Aorta (tissue), 5 donors: ENCODE measurements at regions of chr2 and their contacts with region 1.

Region 1: DNA sequence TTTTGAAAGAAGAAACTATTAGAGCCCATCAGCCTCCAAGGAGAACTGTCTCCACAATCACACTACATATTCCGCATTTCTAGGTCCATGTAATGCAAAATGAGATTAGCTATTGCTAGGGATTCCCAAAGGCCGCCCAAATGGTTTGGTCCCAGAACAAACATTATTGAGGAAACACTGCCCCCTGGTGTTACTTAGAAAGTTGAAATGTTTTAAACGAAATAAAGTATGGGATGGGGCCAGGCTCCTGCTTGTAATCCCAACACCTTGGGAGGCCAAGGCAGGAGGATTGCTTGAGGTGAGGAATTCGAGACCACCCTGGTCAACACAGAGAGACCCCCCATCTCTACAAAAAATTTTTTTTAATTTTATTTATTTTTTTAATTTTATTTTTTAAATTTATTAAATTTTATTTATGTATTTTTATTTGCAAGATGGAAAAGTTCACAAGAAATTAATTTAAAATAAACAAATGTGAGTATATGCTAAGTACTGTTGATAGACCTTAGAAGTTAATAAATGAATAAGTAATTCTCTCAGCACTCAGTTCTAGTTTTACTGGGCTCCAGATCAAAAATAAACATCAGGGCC is 5.5 kb downstream of the NHEJ1 start:
- DNase-seq: no peak
- ATAC-seq: peak; percentile 66
- H3K4me3 ChIP-seq: no peak overlapping the region
- H3K27ac ChIP-seq: no peak overlapping the region
- H3K4me1 ChIP-seq: no peaks in the 10 kb centered on the region
- H3K27me3 ChIP-seq: no peaks in the 10 kb centered on the region

Region 2: GRCh38 chr2:218995972-218996711 is 159.0 kb before region 1 on chr2:
- intact Hi-C with region 1: loop called in 1 of 2 experiments (anchors 10 kb)
- DNase-seq: peak; percentile 87 to 96
- ATAC-seq: peak; percentile 87
- H3K4me3 ChIP-seq: no peak overlapping the region
- H3K27ac ChIP-seq: no peak overlapping the region
- H3K4me1 ChIP-seq: no peaks in the 10 kb centered on the region
- H3K27me3 ChIP-seq: no peaks in the 10 kb centered on the region

Region 3: DNA sequence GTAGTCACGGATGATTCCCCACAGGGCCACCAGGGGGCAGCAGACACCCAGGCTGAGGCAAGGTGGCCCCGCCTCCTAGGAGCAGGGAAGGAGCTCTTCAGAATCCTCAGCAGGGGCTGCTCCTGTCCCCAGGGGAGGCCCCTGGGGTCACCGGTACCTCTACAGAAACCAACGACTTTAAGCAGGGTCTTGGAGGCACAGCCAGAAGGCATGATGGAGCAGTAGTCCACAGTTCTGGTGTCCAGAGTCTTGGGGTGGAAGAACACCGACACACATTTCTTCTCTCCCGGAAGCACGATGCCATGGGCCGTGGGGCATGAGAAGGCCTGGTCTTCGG is 125.4 kb before region 1 on chr2:
- intact Hi-C with region 1: loop called (anchors 10 kb)
- DNase-seq: peak; percentile 83 to 93
- ATAC-seq: peak; percentile 81
- H3K4me3 ChIP-seq: no peak overlapping the region
- H3K27ac ChIP-seq: no peak overlapping the region
- H3K4me1 ChIP-seq: no peaks in the 10 kb centered on the region
- H3K27me3 ChIP-seq: no peaks in the 10 kb centered on the region

Region 4: GRCh38 chr2:219057709-219058540 is 97.2 kb before region 1 on chr2:
- intact Hi-C with region 1: loop called (anchors 1 to 2 kb)
- DNase-seq: peak; percentile 81 to 92
- ATAC-seq: peak; percentile 92
- H3K4me3 ChIP-seq: no peak overlapping the region
- H3K27ac ChIP-seq: no peak overlapping the region
- H3K4me1 ChIP-seq: no peaks in the 10 kb centered on the region
- H3K27me3 ChIP-seq: no peaks in the 10 kb centered on the region